ENCODE measurements at regions of chr12 and their contacts with region 1.

Region 1: DNA sequence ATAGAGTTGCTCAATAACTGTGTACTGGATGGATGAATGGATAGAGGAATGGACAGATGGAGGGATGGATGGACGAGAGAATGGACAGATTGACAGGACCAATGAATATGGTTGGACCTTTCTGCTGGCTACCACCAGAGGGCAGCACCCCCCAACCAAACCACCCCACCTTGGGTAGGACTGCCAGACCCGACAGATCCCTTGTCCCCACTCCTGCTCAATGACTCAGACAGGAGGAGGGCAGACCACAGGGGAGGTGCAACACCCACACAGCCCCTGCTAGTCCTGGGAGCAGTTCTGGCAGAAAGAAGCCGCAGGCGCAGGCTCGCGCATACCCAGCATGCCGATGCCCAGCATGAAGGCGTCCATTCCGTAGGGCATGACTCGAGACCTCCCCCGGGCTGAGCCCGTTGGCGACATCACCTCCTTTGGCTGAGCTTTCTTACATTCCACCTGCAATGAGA is 12.4 kb downstream of the MSI1 start:
- DNase-seq: peak; percentile 86
- ATAC-seq: peak; percentile 60
- H3K4me3 Mint-ChIP-seq: no peak overlapping the region
- H3K27ac Mint-ChIP-seq: no peak overlapping the region
- H3K4me1 Mint-ChIP-seq: peaks cover 28% of the 10 kb centered on the region
- H3K27me3 Mint-ChIP-seq: no peaks in the 10 kb centered on the region
- CTCF ChIP-seq: peak; percentile 85

Region 2: DNA sequence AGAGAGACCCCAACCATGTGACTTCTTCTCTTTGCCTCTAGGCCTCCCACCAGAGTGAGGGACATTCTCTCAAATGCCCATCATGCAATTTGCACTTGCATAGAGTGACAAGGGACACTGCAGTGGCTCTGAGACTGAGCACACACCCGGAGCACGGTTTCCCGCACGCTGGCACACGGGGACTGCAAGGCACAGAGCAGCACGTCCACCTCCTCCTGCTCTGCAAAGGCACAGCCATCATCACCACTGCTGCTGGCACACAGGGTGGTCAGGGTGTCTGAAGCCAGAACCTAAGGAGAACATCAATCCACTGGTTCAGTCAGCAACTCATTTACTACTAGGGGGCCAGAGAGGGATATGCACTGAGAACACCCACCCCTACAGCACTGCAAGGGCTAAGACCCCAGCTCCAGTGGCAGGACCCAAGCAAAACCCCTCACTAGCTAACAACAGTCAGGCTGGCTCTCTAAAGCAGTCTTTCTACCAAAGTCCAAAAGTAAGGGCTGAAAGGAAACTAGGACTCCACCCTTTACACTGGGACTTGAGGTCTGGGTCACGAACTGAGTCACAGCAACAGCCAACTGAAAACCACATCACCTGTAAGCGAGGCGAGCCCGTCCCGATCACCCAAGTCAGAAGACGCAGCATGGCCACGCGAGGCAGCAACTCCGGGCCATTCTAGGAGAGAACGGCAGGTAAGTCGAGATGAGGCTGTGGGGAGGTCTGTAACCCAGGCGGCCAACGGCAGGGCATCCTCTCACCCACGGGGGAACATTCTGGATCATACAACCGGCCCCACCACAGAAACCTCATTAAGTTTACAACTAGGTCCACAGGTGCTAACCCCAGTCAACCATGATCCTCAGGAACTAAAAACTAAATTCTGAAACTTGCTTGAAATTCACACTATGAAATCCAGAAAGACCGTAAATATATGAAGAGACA is 200.0 kb before region 1 on chr12:
- CTCF ChIA-PET with region 1: no interaction called
- POLR2A ChIA-PET with region 1: no interaction called
- DNase-seq: no peak
- ATAC-seq: no peak
- H3K4me3 Mint-ChIP-seq: no peak overlapping the region
- H3K27ac Mint-ChIP-seq: no peak overlapping the region
- H3K4me1 Mint-ChIP-seq: no peaks in the 10 kb centered on the region
- H3K27me3 Mint-ChIP-seq: no peaks in the 10 kb centered on the region
- CTCF ChIP-seq: no peak

Region 3: GRCh38 chr12:120194534-120195395 is 161.8 kb before region 1 on chr12 and contains the start of gene GCN1:
- CTCF ChIA-PET with region 1: no interaction called
- POLR2A ChIA-PET with region 1: no interaction called
- DNase-seq: peak; percentile 74
- ATAC-seq: peak; percentile 66
- H3K4me3 Mint-ChIP-seq: peak within 1 kb of the TSS; percentile 93
- H3K27ac Mint-ChIP-seq: peak within 1 kb of the TSS; percentile 97
- H3K4me1 Mint-ChIP-seq: peaks cover 26% of the 10 kb centered on the region
- H3K27me3 Mint-ChIP-seq: no peaks in the 10 kb centered on the region
- CTCF ChIP-seq: no peak
- total RNA-seq, gene GCN1: 147 to 181 TPM (median 162 TPM) in 3 replicates

Region 4: GRCh38 chr12:120394483-120395367 is 38.1 kb after region 1 on chr12:
- CTCF ChIA-PET with region 1: interaction called, 10 read pairs
- POLR2A ChIA-PET with region 1: interaction called, 8 read pairs
- DNase-seq: peak; percentile 79
- ATAC-seq: peak; percentile 98
- H3K4me3 Mint-ChIP-seq: peak overlapping the region; percentile 45
- H3K27ac Mint-ChIP-seq: peak overlapping the region; percentile 95
- H3K4me1 Mint-ChIP-seq: peaks cover 46% of the 10 kb centered on the region
- H3K27me3 Mint-ChIP-seq: no peaks in the 10 kb centered on the region
- CTCF ChIP-seq: no peak

Region 5: GRCh38 chr12:120429368-120429767 is 72.8 kb after region 1 on chr12:
- CTCF ChIA-PET with region 1: interaction called, 89 read pairs
- POLR2A ChIA-PET with region 1: interaction called, 3 read pairs
- DNase-seq: no peak
- ATAC-seq: no peak
- H3K4me3 Mint-ChIP-seq: no peak overlapping the region
- H3K27ac Mint-ChIP-seq: no peak overlapping the region
- H3K4me1 Mint-ChIP-seq: peaks cover 8% of the 10 kb centered on the region
- H3K27me3 Mint-ChIP-seq: no peaks in the 10 kb centered on the region
- CTCF ChIP-seq: no peak

Region 6: GRCh38 chr12:120437754-120438494 is 81.3 kb after region 1 on chr12 and contains the start of gene COX6A1:
- CTCF ChIA-PET with region 1: interaction called, 89 read pairs
- POLR2A ChIA-PET with region 1: interaction called, 4 read pairs
- DNase-seq: peak; percentile 97
- ATAC-seq: peak; percentile 96
- H3K4me3 Mint-ChIP-seq: peak within 1 kb of the TSS; percentile 94
- H3K27ac Mint-ChIP-seq: peak within 1 kb of the TSS; percentile 99
- H3K4me1 Mint-ChIP-seq: peaks cover 14% of the 10 kb centered on the region
- H3K27me3 Mint-ChIP-seq: no peaks in the 10 kb centered on the region
- CTCF ChIP-seq: no peak
- total RNA-seq, gene COX6A1: 511 to 573 TPM (median 515 TPM) in 3 replicates